B cell (primary cell): ENCODE measurements at regions of chr3 and their contacts with region 1.

Region 1: GRCh38 chr3:129026728-129027543 is 25.8 kb downstream of the EFCC1 start:
- DNase-seq: peak; percentile 95
- ATAC-seq: peak; percentile 98
- H3K4me3 ChIP-seq: peak overlapping the region; percentile 30 to 71 (median 61)
- H3K4me3 Mint-ChIP-seq: peak overlapping the region; percentile 91
- H3K27ac ChIP-seq: peak overlapping the region; percentile 74 to 83
- H3K27ac Mint-ChIP-seq: peak overlapping the region; percentile 95
- H3K4me1 ChIP-seq: peaks cover 13 to 15% of the 10 kb centered on the region in 2 donors
- H3K4me1 Mint-ChIP-seq: peaks cover 22% of the 10 kb centered on the region
- H3K27me3 ChIP-seq: peaks cover 0 to 6% (median 0%) of the 10 kb centered on the region in 4 experiments
- H3K27me3 Mint-ChIP-seq: peaks cover 3% of the 10 kb centered on the region
- CTCF ChIP-seq: peak; percentile 91

Region 2: DNA sequence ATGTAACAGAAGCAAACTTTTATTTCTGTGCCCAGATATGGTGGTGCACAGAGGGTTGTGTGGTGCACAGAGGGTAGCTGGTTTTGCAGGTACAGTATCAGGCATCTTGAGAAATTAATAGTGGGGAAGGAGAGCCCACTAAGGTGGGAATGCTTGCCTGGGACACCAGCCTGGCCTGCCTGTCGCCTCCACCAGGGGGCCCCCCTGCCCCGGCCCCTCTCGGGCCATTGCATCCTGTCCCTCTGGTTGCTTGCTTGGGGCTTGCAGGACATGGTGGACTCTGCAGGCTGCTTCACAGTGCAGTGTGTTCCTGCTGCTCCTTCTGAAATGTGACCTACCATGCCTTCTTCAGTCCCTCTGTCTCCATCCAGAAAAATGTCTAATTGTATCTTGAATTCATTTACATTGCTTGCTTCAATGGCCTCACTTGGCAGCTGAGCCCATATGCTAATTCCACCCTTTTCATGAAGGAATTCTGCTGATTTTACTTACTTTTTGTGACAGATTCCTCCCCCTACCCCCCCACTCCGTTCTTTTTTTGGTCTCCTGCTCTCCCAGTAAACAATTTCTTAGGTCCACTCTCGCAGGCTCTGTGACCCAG is 800.0 kb before region 1 on chr3:
- CTCF ChIA-PET with region 1: no interaction called
- POLR2A ChIA-PET with region 1: no interaction called
- intact Hi-C with region 1: no loop called
- DNase-seq: no peak
- ATAC-seq: no peak
- H3K4me3 ChIP-seq: no peak overlapping the region
- H3K4me3 Mint-ChIP-seq: no peak overlapping the region
- H3K27ac ChIP-seq: no peak overlapping the region
- H3K27ac Mint-ChIP-seq: no peak overlapping the region
- H3K4me1 ChIP-seq: no peaks in the 10 kb centered on the region
- H3K4me1 Mint-ChIP-seq: peaks cover 3% of the 10 kb centered on the region
- H3K27me3 ChIP-seq: no peaks in the 10 kb centered on the region
- H3K27me3 Mint-ChIP-seq: no peaks in the 10 kb centered on the region
- CTCF ChIP-seq: peak; percentile 48

Region 3: GRCh38 chr3:128993461-128994173 is 33.3 kb before region 1 on chr3 and contains the start of gene CFAP92:
- CTCF ChIA-PET with region 1: interaction called, 6 read pairs
- POLR2A ChIA-PET with region 1: no interaction called
- intact Hi-C with region 1: loop called (anchors 1 kb)
- DNase-seq: peak; percentile 92
- ATAC-seq: peak; percentile 99
- H3K4me3 ChIP-seq: peak within 1 kb of the TSS; percentile 19 to 55 (median 44)
- H3K4me3 Mint-ChIP-seq: peak within 1 kb of the TSS; percentile 73
- H3K27ac ChIP-seq: peak within 1 kb of the TSS in 1 of 2 donors; percentile 9
- H3K27ac Mint-ChIP-seq: peak within 1 kb of the TSS; percentile 61
- H3K4me1 ChIP-seq: peaks cover 20 to 27% of the 10 kb centered on the region in 2 donors
- H3K4me1 Mint-ChIP-seq: peaks cover 16% of the 10 kb centered on the region
- H3K27me3 ChIP-seq: peaks cover 0 to 30% (median 9%) of the 10 kb centered on the region in 4 experiments
- H3K27me3 Mint-ChIP-seq: peaks cover 14% of the 10 kb centered on the region
- CTCF ChIP-seq: no peak
- total RNA-seq, gene CFAP92: not detected in 2 replicates

Region 4: GRCh38 chr3:129120254-129121004 is 93.5 kb after region 1 on chr3:
- CTCF ChIA-PET with region 1: interaction called, 3 read pairs
- POLR2A ChIA-PET with region 1: interaction called, 3 read pairs
- intact Hi-C with region 1: loop called (anchors 2 kb)
- DNase-seq: peak; percentile 93
- ATAC-seq: peak; percentile 61
- H3K4me3 ChIP-seq: peak overlapping the region; percentile 68 to 81 (median 76)
- H3K4me3 Mint-ChIP-seq: peak overlapping the region; percentile 88
- H3K27ac ChIP-seq: peak overlapping the region; percentile 61 to 62
- H3K27ac Mint-ChIP-seq: peak overlapping the region; percentile 84
- H3K4me1 ChIP-seq: peaks cover 42 to 46% of the 10 kb centered on the region in 2 donors
- H3K4me1 Mint-ChIP-seq: peaks cover 53% of the 10 kb centered on the region
- H3K27me3 ChIP-seq: no peaks in the 10 kb centered on the region
- H3K27me3 Mint-ChIP-seq: no peaks in the 10 kb centered on the region
- CTCF ChIP-seq: peak; percentile 30